PC-3 (cell line): ENCODE measurements at regions of chrX and their contacts with region 1.

Region 1: GRCh38 chrX:49878834-49879659 is at the start of gene USP27X:
- DNase-seq: peak; percentile 78
- ATAC-seq: peak; percentile 86
- H3K4me3 ChIP-seq: peak within 1 kb of the TSS; percentile 68
- H3K27ac ChIP-seq: peak within 1 kb of the TSS; percentile 54
- H3K4me1 ChIP-seq: peaks cover 8% of the 10 kb centered on the region; the same call in 1 of the 2 replicates
- H3K27me3 ChIP-seq: no peaks in the 10 kb centered on the region
- CTCF ChIP-seq: peak; percentile 59
- total RNA-seq, gene USP27X: 0.62 and 2.7 TPM in 2 replicates

Region 2: DNA sequence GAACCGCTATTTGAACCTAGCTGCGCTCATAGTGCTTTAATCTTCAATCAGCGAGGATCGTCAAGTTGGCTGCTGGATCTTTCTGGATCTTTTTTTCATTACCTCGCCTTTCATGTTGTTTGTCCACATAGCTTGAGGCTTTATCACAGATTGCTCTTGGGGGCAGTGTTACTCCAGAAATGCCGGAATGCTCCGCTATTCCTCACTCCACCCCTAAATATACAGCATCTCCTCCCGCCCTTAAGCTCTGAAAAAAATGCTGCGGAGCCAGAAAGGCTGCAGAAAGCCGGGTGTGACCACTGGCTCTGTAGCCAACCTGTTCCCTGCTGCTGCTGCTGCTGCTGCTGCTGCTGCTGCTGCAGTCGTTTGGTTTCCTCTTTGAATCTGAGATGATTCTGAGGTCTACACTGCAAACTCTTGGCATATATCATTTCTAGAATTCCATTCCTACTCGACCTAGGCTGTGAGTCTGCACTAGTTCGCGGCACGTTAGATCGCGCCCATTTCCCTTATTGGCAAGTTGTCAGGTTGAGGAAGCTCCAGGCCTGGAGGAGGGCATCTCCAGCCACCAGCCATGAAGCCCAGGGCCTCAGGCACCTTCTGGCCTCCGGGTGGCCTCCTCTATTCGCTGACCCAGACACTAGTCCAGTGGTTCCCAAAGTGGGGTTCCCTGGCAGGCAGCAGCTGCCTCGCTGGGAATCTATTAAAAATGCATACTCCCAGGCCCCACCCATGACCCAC is 1247.5 kb before region 1 on chrX:
- CTCF ChIA-PET with region 1: no interaction called
- POLR2A ChIA-PET with region 1: no interaction called
- intact Hi-C with region 1: loop called (anchors 2 kb)
- DNase-seq: peak; percentile 97
- ATAC-seq: peak; percentile 98
- H3K4me3 ChIP-seq: peak overlapping the region; percentile 54
- H3K27ac ChIP-seq: no peak overlapping the region
- H3K4me1 ChIP-seq: peaks cover 9% of the 10 kb centered on the region
- H3K27me3 ChIP-seq: no peaks in the 10 kb centered on the region
- CTCF ChIP-seq: peak; percentile 79

Region 3: DNA sequence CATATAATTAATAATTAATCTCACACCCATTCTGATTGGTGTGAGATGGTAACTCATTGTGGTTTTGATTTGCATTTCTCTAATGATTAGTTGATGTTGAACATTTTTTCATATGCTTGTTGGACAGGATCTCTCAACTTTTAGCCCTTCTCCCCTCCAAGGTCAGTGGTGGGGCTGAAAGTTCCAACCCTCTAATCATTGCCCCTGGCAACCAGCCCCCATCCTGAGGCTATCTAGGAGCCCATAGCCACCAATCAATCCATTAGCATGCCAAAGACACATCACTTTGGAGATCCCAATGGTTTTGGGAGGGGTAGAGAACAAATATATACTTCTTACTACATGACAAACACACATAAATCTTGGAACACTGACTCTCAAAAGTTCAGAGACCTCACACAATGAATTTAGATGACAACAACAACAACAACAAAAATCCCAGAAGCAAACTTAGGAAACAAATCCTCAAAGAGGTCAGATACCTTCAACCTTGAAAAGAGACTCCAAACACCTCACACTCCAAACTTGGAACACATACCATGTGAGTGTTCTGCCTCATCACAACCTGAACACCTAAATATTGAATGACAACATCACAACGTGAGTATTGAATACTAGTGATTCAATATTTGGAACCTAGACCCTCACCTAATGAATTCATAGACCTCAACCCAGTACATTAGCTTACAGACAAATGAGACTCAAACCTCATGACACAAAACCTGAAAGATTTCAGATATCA is 69.0 kb before region 1 on chrX:
- CTCF ChIA-PET with region 1: no interaction called
- POLR2A ChIA-PET with region 1: no interaction called
- intact Hi-C with region 1: no loop called
- DNase-seq: no peak
- ATAC-seq: no peak
- H3K4me3 ChIP-seq: no peak overlapping the region
- H3K27ac ChIP-seq: no peak overlapping the region
- H3K4me1 ChIP-seq: no peaks in the 10 kb centered on the region
- H3K27me3 ChIP-seq: no peaks in the 10 kb centered on the region
- CTCF ChIP-seq: no peak

Region 4: DNA sequence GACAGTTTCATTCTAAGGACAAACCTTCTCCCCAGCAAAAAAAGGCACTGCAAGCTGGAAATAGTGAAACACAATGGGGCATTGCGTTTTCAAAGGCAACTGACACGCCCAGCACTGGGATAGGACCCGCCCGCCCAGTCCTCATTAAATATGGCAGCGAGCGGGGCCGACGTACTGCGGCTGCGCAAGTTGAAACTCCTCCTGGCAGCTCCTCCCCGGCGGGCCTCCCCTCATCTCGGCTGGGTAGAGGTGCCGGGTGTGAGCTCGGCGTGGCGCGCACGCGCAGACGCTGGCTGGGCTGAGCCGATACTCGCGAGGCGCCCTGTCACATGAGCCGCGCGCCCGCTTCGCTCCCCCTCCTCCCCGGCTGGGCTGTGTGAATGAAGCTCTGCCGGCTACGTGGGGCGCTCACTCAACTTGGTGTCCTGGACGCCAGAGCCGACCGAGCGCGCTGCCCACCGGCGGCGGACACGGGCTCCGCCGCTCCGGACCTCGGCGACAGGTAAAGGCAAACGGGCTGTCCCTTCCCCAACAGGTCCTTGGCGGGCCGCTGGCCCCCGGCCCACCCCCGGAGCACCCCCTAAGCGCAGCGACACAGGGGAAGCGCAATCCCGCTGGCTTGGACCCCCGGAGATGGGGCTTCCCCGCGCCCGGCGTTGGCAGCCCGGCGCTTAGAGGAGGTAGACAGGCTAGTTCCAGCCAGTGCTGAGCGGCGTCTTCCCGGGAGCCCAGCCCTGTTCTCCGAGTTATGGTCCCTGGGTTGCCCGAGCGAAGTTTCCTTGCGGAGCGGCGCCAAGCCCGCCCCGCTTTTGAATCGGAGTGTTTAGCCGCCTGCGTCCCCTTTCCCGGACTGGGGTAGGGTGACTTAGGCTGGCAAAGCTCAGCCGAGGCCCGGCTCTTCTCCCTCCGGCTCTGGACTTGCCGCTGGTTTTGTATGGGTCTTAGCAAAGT is 43.5 kb after region 1 on chrX and contains the start of gene CLCN5:
- CTCF ChIA-PET with region 1: interaction called, 4 read pairs
- POLR2A ChIA-PET with region 1: no interaction called
- intact Hi-C with region 1: loop called (anchors 5 kb)
- DNase-seq: peak; percentile 94
- ATAC-seq: peak; percentile 94
- H3K4me3 ChIP-seq: peak within 1 kb of the TSS; percentile 87
- H3K27ac ChIP-seq: no peak within 1 kb of the TSS
- H3K4me1 ChIP-seq: peaks cover 6% of the 10 kb centered on the region
- H3K27me3 ChIP-seq: no peaks in the 10 kb centered on the region
- CTCF ChIP-seq: no peak
- total RNA-seq, gene CLCN5: 2.8 and 5.9 TPM in 2 replicates

Region 5: GRCh38 chrX:49977319-49978090 is 98.5 kb after region 1 on chrX:
- CTCF ChIA-PET with region 1: no interaction called
- POLR2A ChIA-PET with region 1: no interaction called
- intact Hi-C with region 1: no loop called
- DNase-seq: no peak
- ATAC-seq: no peak
- H3K4me3 ChIP-seq: no peak overlapping the region
- H3K27ac ChIP-seq: no peak overlapping the region
- H3K4me1 ChIP-seq: no peaks in the 10 kb centered on the region
- H3K27me3 ChIP-seq: no peaks in the 10 kb centered on the region
- CTCF ChIP-seq: no peak

Region 6: DNA sequence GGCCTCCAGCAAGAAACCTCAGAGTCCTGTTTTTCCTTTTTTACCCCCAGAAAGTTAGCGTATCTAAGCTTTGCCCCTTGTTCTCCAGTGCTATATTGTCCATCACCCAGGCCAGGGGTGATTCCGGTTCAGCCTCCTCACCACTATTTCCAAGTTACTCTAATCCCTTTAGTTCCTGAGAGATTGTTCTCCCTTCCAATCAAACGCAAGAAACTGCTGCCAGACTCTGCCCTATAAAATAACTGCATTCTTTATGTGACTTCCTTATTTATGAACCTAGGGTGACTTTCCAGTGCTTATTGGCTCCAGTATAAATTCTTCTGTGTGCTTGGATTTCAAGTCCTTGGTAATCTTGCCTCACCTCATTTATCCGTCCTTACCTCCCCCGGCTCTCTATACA is 109.1 kb after region 1 on chrX:
- CTCF ChIA-PET with region 1: no interaction called
- POLR2A ChIA-PET with region 1: no interaction called
- intact Hi-C with region 1: no loop called
- DNase-seq: peak; percentile 18
- ATAC-seq: no peak
- H3K4me3 ChIP-seq: no peak overlapping the region
- H3K27ac ChIP-seq: no peak overlapping the region
- H3K4me1 ChIP-seq: no peaks in the 10 kb centered on the region
- H3K27me3 ChIP-seq: no peaks in the 10 kb centered on the region
- CTCF ChIP-seq: no peak